Pancreas (tissue), 10 donors: ENCODE measurements at regions of chr2 and their contacts with region 1.

Region 1: DNA sequence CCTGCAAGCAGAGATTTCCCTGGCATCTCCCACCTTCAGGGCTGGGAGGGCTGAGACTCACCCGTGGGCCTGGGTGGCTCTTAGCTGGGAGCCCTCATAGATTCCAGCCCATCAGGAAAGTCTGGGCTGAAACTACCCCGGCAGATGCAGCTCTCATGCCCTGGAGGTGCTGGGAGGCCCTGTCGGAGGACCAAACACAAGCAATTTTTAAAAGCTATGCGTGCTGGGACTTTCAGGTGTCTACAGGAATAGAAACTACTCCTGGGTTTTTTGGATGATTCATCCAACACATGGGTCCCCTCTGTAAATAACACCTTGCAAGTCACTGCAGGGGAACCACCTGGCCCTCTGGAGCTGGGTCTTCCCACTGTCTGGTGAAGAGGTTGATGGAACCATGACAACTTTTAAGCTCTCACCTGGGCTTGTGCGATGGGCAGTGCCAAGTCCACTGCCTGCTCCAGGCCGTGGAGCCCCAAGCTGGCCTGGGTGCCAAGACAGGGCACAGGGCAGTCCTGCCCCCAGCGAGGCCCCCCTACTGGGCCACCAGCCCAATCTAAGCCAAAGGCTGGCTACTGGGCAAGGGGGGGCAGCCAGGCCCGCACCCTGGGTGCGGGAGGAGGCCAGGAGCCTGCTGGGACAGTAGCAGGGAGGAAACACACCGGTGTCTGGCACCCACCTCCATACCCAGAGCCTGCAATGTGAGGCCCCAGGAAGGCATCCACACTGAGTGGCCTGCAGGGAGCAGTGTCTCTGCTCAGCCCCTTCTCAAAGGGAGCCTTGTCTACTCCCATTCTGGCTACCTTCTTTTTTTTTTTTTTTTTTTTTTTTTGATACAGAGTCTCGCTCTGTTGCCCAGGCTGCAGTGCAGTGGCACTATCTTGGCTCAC is 1.1 kb upstream of the GPR55 start:
- DNase-seq: peak in 1 of 6 donors; percentile 8
- ATAC-seq: no peak
- H3K4me3 ChIP-seq: no peak overlapping the region
- H3K27ac ChIP-seq: no peak overlapping the region
- H3K4me1 ChIP-seq: no peaks in the 10 kb centered on the region
- H3K27me3 ChIP-seq: no peaks in the 10 kb centered on the region
- CTCF ChIP-seq: no peak

Region 2: GRCh38 chr2:230781130-230781797 is 144.9 kb before region 1 on chr2:
- intact Hi-C with region 1: no loop called
- DNase-seq: no peak
- ATAC-seq: peak; percentile 38 to 82 (median 69)
- H3K4me3 ChIP-seq: no peak overlapping the region
- H3K27ac ChIP-seq: no peak overlapping the region
- H3K4me1 ChIP-seq: peaks cover 0 to 4% (median 0%) of the 10 kb centered on the region in 3 donors
- H3K27me3 ChIP-seq: no peaks in the 10 kb centered on the region
- CTCF ChIP-seq: no peak

Region 3: GRCh38 chr2:230873476-230874451 is 52.4 kb before region 1 on chr2:
- intact Hi-C with region 1: loop called in 1 of 3 experiments (anchors 2 kb)
- DNase-seq: peak in 1 of 6 donors; percentile 45
- ATAC-seq: no peak
- H3K4me3 ChIP-seq: no peak overlapping the region
- H3K27ac ChIP-seq: no peak overlapping the region
- H3K4me1 ChIP-seq: no peaks in the 10 kb centered on the region
- H3K27me3 ChIP-seq: no peaks in the 10 kb centered on the region
- CTCF ChIP-seq: no peak

Region 4: DNA sequence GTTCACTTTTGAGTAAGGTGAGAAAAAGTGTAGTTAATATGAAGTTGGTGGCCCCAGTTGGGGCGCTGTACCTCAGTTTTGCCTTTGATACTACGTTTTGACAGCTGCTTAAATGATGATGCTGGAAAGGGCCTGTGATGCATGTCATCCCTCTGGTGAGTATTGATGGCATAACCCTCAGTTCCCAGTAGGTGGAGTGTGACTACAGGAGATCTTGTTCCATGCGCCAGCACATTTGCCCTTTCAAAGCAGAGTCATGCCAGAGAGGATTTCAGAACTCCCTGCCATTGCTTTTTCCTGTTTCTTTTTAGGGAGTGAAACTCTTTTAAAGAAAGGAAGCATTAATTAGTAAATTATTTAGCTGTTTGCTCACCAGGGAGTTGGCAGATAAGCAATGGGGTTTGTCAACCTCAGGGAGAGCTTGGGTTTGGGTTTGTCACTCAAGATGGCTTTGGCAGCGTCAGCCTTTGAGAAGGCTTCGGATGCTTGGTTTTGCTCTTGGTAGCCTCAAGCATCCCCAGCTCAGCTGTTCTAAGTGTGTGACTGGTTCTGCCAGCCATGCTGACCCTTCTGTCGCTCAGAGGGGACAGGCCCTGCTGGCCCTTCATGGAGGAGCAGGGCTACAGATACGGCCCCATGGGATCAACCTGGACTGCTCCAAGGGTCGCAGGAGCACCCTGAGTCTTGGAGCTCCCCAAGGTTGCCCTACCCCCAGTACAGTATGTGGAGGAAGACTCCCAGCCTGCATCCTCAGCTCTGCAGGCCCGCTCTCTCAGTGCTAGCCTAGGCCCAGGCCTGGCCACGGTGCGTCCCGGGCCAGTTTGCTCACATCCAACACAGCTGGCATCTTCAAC is 301.4 kb after region 1 on chr2:
- intact Hi-C with region 1: no loop called
- DNase-seq: peak in 3 of 6 donors; percentile 48 to 70 (median 59)
- ATAC-seq: peak; percentile 94 to 100 (median 99)
- H3K4me3 ChIP-seq: no peak overlapping the region
- H3K27ac ChIP-seq: no peak overlapping the region
- H3K4me1 ChIP-seq: no peaks in the 10 kb centered on the region
- H3K27me3 ChIP-seq: no peaks in the 10 kb centered on the region
- CTCF ChIP-seq: peak; percentile 31 to 72 (median 69)

Region 5: DNA sequence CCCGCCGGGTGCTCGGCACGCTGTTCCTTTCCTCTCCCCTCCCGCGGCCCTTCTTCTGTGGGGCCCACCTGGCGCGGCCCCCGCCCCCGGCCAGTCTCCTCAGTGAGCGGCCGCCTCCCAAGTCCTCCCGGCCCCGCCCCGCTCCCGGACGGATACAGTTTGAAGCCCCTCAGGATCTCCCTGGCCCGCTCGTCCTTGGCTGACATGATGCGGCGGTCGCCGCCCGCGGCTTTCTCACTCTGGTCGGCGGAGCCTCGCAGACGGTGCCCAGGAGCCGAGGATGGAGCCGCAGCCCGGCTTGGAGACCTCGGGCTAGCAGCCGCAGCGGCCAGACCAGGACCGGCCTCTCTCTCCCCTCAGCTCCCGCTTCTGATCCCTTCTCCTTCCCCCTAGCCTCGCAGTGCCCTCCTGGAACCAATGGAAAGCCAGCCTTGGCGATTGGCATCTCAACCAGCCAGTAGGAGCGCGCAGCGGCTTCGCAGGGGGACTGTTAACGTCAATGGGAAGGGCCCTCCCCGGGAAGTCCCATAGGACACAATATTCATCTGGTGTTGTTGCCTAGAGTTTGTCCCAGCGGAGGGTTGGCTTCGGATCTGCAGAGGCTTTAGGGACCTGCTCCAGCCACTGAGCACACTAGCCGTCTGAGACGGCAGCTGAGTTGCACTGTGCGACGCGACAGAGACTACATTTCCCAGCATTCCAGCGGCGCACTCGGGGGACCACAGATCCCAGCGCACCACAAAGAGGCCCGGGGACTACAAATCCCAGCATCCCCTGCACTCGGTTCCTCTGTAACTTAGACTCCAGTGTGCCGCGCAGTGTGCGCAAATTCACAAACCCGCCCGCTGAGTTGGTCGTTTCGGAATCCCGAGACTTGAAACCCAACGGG is 855.0 kb after region 1 on chr2 and contains the start of gene PDE6D:
- intact Hi-C with region 1: no loop called
- DNase-seq: peak; percentile 96 to 98 (median 98)
- ATAC-seq: peak; percentile 94 to 97 (median 96)
- H3K4me3 ChIP-seq: peak within 1 kb of the TSS; percentile 51 to 98 (median 78)
- H3K27ac ChIP-seq: peak within 1 kb of the TSS; percentile 28 to 91 (median 58)
- H3K4me1 ChIP-seq: peaks cover 0 to 21% (median 19%) of the 10 kb centered on the region in 3 donors
- H3K27me3 ChIP-seq: no peaks in the 10 kb centered on the region
- CTCF ChIP-seq: no peak
- total RNA-seq, gene PDE6D: 5.6 to 11.9 (median 7.0) TPM

Region 6: GRCh38 chr2:232073026-232073425 is 1146.9 kb after region 1 on chr2:
- intact Hi-C with region 1: no loop called
- DNase-seq: no peak
- ATAC-seq: no peak
- H3K4me3 ChIP-seq: no peak overlapping the region
- H3K27ac ChIP-seq: no peak overlapping the region
- H3K4me1 ChIP-seq: peaks cover 0 to 7% (median 4%) of the 10 kb centered on the region in 3 donors
- H3K27me3 ChIP-seq: no peaks in the 10 kb centered on the region
- CTCF ChIP-seq: no peak